A549 (cell line): ENCODE measurements at regions of chr22 and their contacts with region 1.

Region 1: GRCh38 chr22:23281406-23282088 is 101.2 kb downstream of the BCR start:
- DNase-seq: peak; percentile 61 to 64
- ATAC-seq: peak; percentile 81 to 93
- H3K4me3 ChIP-seq: no peak overlapping the region
- H3K27ac ChIP-seq: peak overlapping the region; percentile 59 to 77; a peak in 5 of 6 replicates
- H3K4me1 ChIP-seq: peaks cover 27% of the 10 kb centered on the region
- CTCF ChIP-seq: peak; percentile 70
- EP300 ChIP-seq: no peak
- POLR2A ChIP-seq: no peak
- RAD21 ChIP-seq: peak; percentile 83 to 85

Region 2: GRCh38 chr22:23178512-23179254 is 102.9 kb before region 1 on chr22:
- CTCF ChIA-PET with region 1: interaction called, 186 read pairs
- POLR2A ChIA-PET with region 1: interaction called, 5 read pairs
- DNase-seq: peak; percentile 55 to 63
- ATAC-seq: peak; percentile 54 to 82; a peak in 4 of 6 replicates
- H3K4me3 ChIP-seq: no peak overlapping the region
- H3K27ac ChIP-seq: no peak overlapping the region
- H3K4me1 ChIP-seq: peaks cover 28% of the 10 kb centered on the region
- CTCF ChIP-seq: peak; percentile 83
- EP300 ChIP-seq: no peak
- POLR2A ChIP-seq: no peak
- RAD21 ChIP-seq: peak; percentile 86 to 91

Region 3: GRCh38 chr22:23251445-23252232 is 29.9 kb before region 1 on chr22:
- CTCF ChIA-PET with region 1: interaction called, 14 read pairs
- POLR2A ChIA-PET with region 1: no interaction called
- DNase-seq: peak; percentile 6 to 9
- ATAC-seq: no peak; a peak in 2 of 6 replicates
- H3K4me3 ChIP-seq: no peak overlapping the region
- H3K27ac ChIP-seq: no peak overlapping the region
- H3K4me1 ChIP-seq: peaks cover 10% of the 10 kb centered on the region
- CTCF ChIP-seq: no peak
- EP300 ChIP-seq: no peak
- POLR2A ChIP-seq: no peak
- RAD21 ChIP-seq: no peak

Region 4: GRCh38 chr22:23263651-23264555 is 17.6 kb before region 1 on chr22:
- CTCF ChIA-PET with region 1: interaction called, 13 read pairs
- POLR2A ChIA-PET with region 1: no interaction called
- DNase-seq: no peak
- ATAC-seq: no peak
- H3K4me3 ChIP-seq: no peak overlapping the region
- H3K27ac ChIP-seq: no peak overlapping the region
- H3K4me1 ChIP-seq: no peaks in the 10 kb centered on the region
- CTCF ChIP-seq: no peak
- EP300 ChIP-seq: no peak
- POLR2A ChIP-seq: no peak
- RAD21 ChIP-seq: no peak

Region 5: GRCh38 chr22:23270212-23270733 is 11.3 kb before region 1 on chr22:
- CTCF ChIA-PET with region 1: interaction called, 38 read pairs
- POLR2A ChIA-PET with region 1: no interaction called
- DNase-seq: no peak
- ATAC-seq: no peak
- H3K4me3 ChIP-seq: no peak overlapping the region
- H3K27ac ChIP-seq: no peak overlapping the region
- H3K4me1 ChIP-seq: no peaks in the 10 kb centered on the region
- CTCF ChIP-seq: no peak
- EP300 ChIP-seq: no peak
- POLR2A ChIP-seq: no peak
- RAD21 ChIP-seq: no peak

Region 6: DNA sequence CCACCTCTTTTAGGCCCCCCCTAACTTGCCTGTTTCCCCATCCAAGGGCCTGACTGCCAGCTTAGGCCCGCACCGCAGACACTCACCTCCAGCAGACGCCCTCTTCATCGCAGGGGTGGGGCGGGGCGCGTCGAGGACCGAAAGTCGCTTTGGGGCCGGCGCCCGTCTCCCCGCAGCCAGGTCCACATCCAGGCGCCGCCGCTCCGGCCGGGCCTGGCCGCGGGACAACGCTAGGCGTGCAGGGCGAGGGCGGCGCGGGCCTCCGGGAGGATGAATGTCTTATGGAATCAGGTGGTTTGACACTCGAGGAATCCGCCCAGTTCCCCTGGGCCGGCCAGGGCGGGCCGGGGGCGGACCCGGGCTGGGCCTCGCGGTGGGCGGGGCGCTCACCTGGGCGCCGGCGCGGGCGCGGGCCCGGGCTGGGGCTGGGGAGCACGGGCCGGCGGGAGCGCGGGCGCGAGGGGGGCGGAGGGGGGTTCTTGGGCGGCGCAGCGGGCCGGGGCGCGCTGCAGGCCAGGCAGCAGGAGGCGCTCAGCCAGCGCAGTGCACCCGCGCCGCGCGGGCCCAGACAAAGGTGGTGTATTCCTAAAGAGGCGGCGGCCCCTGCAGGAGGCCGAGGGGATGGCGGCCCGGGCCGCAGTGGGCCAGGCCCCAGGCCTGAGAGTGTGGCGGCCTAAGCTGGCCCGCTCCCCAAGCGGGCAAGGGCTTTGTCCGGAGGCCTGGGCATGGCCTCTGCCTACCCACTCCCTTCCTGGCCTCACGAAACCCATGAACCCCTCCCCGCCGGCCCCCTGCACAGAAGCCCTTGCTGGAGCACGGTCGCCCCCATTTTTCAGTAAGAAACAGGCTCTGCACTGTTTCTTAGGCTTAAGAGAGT is 121.0 kb after region 1 on chr22:
- CTCF ChIA-PET with region 1: no interaction called
- POLR2A ChIA-PET with region 1: no interaction called
- DNase-seq: peak; percentile 48 to 82
- ATAC-seq: peak; percentile 87 to 94
- H3K4me3 ChIP-seq: peak overlapping the region; percentile 57
- H3K27ac ChIP-seq: peak overlapping the region; percentile 93 to 97
- H3K4me1 ChIP-seq: peaks cover 15% of the 10 kb centered on the region
- CTCF ChIP-seq: peak; percentile 60
- EP300 ChIP-seq: no peak
- POLR2A ChIP-seq: peak; percentile 22
- RAD21 ChIP-seq: peak; percentile 47 to 65